Activated CD8-positive, alpha-beta T cell treated with anti-CD3 and anti-CD28 coated beads, Interleukin-2, amount 10 ng/mL, durations not matched to agents 7 days and 5 days (primary cell): ENCODE measurements at regions of chr3 and their contacts with region 1.

Region 1: DNA sequence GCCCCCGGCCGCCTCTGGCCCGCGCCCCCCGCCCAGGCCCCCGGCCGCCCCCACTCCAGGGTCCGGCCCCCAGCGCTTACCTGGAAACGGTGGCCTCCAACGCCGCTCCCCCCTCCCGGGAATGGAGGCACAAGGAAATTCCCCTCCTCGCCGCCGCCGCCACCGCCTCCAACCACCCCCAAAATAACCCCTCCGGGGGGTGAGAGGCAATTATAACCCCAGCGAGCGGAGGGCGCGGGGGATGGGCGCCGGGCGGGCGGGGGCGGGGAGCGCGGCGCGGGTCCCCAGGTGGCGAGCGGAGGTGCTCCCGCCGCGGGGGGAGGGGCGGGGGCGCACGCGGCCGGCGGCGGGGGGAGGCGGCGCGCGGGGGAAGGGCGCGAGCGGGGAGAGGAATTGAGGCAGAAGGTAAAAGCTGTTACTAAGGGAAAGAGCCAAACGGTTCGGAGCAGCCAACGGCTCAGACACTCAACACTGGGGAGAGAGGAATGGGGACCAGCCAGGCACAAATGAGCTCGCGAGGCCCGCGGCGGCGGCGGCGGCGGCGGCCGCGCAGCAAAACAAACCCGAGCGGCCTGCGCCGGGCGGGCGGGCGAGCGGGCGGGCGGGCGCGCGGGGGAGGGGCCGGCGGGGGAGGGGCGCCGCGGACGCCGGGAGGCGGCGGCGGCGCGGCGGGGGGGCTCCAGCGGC is at the start of gene TBL1XR1:
- DNase-seq: peak; percentile 92
- ATAC-seq: peak; percentile 67
- H3K4me3 Mint-ChIP-seq: peak within 1 kb of the TSS; percentile 98
- H3K27ac Mint-ChIP-seq: peak within 1 kb of the TSS; percentile 99
- H3K4me1 Mint-ChIP-seq: peaks cover 66% of the 10 kb centered on the region
- H3K27me3 Mint-ChIP-seq: no peaks in the 10 kb centered on the region
- total RNA-seq, gene TBL1XR1: 165 to 166 TPM

Region 2: GRCh38 chr3:177050501-177051237 is 146.5 kb before region 1 on chr3:
- CTCF ChIA-PET with region 1: interaction called, 14 read pairs
- POLR2A ChIA-PET with region 1: interaction called, 8 read pairs
- DNase-seq: no peak
- ATAC-seq: peak; percentile 72
- H3K4me3 Mint-ChIP-seq: no peak overlapping the region
- H3K27ac Mint-ChIP-seq: peak overlapping the region; percentile 63
- H3K4me1 Mint-ChIP-seq: peaks cover 13% of the 10 kb centered on the region
- H3K27me3 Mint-ChIP-seq: no peaks in the 10 kb centered on the region

Region 3: GRCh38 chr3:177069514-177070329 is 127.5 kb before region 1 on chr3:
- CTCF ChIA-PET with region 1: no interaction called
- POLR2A ChIA-PET with region 1: no interaction called
- DNase-seq: no peak
- ATAC-seq: no peak
- H3K4me3 Mint-ChIP-seq: no peak overlapping the region
- H3K27ac Mint-ChIP-seq: no peak overlapping the region
- H3K4me1 Mint-ChIP-seq: peaks cover 22% of the 10 kb centered on the region
- H3K27me3 Mint-ChIP-seq: no peaks in the 10 kb centered on the region

Region 4: DNA sequence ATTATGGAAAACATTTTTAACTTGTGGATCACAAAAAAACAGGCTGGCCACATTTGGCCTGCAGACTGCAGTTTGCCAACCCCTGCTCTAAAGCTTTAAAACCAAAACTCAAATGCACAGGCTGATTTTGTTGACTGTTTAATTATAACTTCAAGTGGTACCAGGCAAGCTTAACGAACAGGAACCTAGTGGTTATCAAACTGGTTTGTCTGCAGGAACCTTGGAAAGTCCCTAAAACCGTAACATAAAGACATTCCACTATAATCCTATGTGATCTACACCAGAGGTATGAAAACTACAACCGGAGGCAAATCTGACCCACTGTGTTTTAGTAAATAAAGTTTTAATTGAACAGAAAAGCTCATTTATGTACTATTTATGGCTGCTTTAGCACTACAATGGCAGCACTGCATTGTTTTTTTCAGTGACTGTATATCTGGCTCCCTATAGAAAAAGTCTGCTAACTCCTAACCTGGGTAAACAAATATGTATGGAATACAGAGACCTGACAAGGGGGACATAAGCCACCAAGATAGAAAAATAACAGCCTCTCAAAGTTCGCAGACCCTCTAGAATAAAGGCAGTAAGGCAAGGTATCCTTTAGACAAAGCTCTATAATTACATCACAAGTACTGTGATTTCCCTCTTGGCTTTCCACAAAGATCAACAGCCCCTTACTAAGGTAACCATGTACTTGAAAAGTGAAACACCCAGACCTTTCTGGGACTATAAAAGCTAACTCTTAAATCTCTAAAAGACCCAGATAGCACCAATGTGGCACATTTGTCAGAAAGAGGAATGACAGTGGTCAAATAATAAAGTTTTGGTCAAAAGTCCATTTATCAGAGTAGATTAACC is 52.0 kb before region 1 on chr3:
- CTCF ChIA-PET with region 1: interaction called, 9 read pairs
- POLR2A ChIA-PET with region 1: interaction called, 52 read pairs
- DNase-seq: no peak
- ATAC-seq: peak; percentile 69
- H3K4me3 Mint-ChIP-seq: peak overlapping the region; percentile 48
- H3K27ac Mint-ChIP-seq: peak overlapping the region; percentile 77
- H3K4me1 Mint-ChIP-seq: peaks cover 65% of the 10 kb centered on the region
- H3K27me3 Mint-ChIP-seq: no peaks in the 10 kb centered on the region